Caco-2 (cell line): ENCODE measurements at regions of chr10 and their contacts with region 1.

Region 1: DNA sequence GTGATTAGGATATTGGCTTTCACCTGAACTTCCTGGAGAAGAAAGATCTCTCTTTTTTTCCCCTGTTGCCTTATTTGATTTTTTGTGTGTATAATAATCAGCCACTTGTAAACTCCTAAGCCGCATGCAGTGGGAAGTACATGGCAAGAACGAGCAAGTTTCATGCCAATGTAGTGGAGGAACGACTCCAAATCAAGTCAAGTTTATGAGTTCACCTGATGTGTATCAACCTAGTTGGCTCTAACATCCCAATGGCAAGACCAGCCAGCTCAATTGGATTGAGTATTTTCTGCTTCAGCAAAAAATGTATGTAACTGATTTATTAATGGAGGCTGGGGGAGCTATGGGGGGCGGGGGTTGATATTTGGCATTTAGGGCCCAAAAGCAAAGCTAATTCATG is 65.5 kb upstream of the LYZL1 start:
- DNase-seq: no peak
- H3K4me3 ChIP-seq: no peak overlapping the region
- H3K4me3 Mint-ChIP-seq: no peak overlapping the region
- H3K27ac Mint-ChIP-seq: no peak overlapping the region
- H3K4me1 ChIP-seq: peaks cover 25% of the 10 kb centered on the region
- H3K4me1 Mint-ChIP-seq: peaks cover 14% of the 10 kb centered on the region
- H3K27me3 ChIP-seq: no peaks in the 10 kb centered on the region
- H3K27me3 Mint-ChIP-seq: no peaks in the 10 kb centered on the region
- CTCF ChIP-seq: no peak

Region 2: DNA sequence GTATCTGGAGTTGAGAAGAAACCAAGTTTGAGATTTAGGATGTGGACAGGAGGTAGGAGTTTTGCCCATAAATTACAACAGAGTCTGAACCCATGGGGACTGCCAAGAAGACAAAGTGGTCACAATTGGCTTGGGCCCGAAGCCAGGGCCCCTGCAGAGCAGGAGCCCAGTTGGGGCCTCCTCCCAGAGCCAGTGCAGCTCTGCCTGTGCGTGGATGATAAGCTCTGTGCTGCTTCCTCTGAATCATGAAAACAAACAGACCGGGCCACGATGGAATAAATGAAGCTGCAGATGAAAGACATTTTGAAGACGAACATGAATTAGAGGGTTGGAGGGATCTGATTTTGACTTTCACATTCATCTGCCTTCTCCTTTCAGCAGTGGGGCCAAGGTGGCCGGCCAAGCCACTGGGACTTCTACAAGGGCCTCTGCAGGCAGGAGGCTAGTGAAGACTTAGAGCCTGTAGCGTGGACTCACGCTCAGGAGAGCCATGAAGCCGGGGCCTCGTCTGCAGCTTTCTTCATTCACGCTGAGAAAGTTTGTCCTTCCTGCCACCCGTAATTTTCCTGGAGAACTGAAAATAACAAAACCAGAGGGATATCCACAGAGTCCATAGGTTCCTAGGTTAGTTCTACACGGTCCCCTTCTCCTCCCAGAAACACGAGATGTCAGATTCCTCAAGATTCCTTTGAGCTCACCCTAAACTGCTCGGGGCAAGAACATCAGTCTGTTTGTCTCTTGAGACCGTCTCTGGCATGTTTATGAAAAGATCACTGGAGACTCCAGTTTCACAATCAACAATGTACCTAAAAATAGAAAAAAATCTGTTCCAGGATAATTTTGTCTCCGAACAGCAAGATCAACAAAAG is 91.1 kb before region 1 on chr10:
- CTCF ChIA-PET with region 1: no interaction called
- POLR2A ChIA-PET with region 1: no interaction called
- intact Hi-C with region 1: loop called (anchors 5 kb)
- DNase-seq: no peak
- H3K4me3 ChIP-seq: no peak overlapping the region
- H3K4me3 Mint-ChIP-seq: no peak overlapping the region
- H3K27ac Mint-ChIP-seq: peak overlapping the region; percentile 51
- H3K4me1 ChIP-seq: peaks cover 33% of the 10 kb centered on the region
- H3K4me1 Mint-ChIP-seq: peaks cover 15% of the 10 kb centered on the region
- H3K27me3 ChIP-seq: no peaks in the 10 kb centered on the region
- H3K27me3 Mint-ChIP-seq: no peaks in the 10 kb centered on the region
- CTCF ChIP-seq: no peak